A673 (cell line): ENCODE measurements at regions of chr21 and their contacts with region 1.

Region 1: GRCh38 chr21:33841561-33841960 is 74.0 kb downstream of the ATP5PO start:
- DNase-seq: no peak
- H3K4me3 ChIP-seq: no peak overlapping the region
- H3K27ac ChIP-seq: no peak overlapping the region
- H3K4me1 ChIP-seq: no peaks in the 10 kb centered on the region
- H3K27me3 ChIP-seq: no peaks in the 10 kb centered on the region
- CTCF ChIP-seq: no peak

Region 2: GRCh38 chr21:33825915-33826314 is 15.6 kb before region 1 on chr21:
- CTCF ChIA-PET with region 1: no interaction called
- POLR2A ChIA-PET with region 1: interaction called, 11 read pairs
- intact Hi-C with region 1: no loop called
- DNase-seq: no peak
- H3K4me3 ChIP-seq: no peak overlapping the region
- H3K27ac ChIP-seq: no peak overlapping the region
- H3K4me1 ChIP-seq: no peaks in the 10 kb centered on the region
- H3K27me3 ChIP-seq: no peaks in the 10 kb centered on the region
- CTCF ChIP-seq: no peak

Region 3: GRCh38 chr21:33947451-33948095 is 106.0 kb after region 1 on chr21:
- CTCF ChIA-PET with region 1: no interaction called
- POLR2A ChIA-PET with region 1: no interaction called
- intact Hi-C with region 1: no loop called
- DNase-seq: peak; percentile 92
- H3K4me3 ChIP-seq: no peak overlapping the region
- H3K27ac ChIP-seq: peak overlapping the region; percentile 51
- H3K4me1 ChIP-seq: peaks cover 16% of the 10 kb centered on the region
- H3K27me3 ChIP-seq: no peaks in the 10 kb centered on the region
- CTCF ChIP-seq: no peak

Region 4: GRCh38 chr21:34351786-34352241 is 510.3 kb after region 1 on chr21:
- CTCF ChIA-PET with region 1: no interaction called
- POLR2A ChIA-PET with region 1: no interaction called
- intact Hi-C with region 1: no loop called
- DNase-seq: peak; percentile 56
- H3K4me3 ChIP-seq: no peak overlapping the region
- H3K27ac ChIP-seq: no peak overlapping the region
- H3K4me1 ChIP-seq: no peaks in the 10 kb centered on the region
- H3K27me3 ChIP-seq: no peaks in the 10 kb centered on the region
- CTCF ChIP-seq: peak; percentile 64